Transverse colon (tissue), 4 donors: ENCODE measurements at regions of chr6 and their contacts with region 1.

Region 1: DNA sequence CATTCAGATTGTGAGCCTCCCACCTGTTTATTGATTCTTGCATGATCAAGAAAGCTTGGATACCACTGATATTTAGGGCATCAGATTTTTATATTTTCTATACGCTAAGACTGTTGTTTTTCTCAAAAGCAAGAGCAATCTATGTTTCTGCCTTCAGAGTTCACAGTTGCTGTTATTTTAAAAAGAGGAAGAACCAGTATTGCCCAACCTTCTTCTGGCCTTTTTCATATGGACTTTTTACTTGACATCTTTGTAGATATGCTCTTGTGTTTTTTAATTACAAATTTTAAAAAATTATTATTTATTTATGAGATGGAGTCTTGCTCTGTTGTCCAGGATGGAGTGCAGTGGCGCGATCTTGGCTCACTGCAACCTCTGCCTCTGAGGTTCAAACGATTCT is 28.9 kb downstream of the SLC17A5 start:
- DNase-seq: no peak
- H3K4me3 ChIP-seq: no peak overlapping the region
- H3K27ac ChIP-seq: no peak overlapping the region
- H3K4me1 ChIP-seq: no peaks in the 10 kb centered on the region
- H3K27me3 ChIP-seq: no peaks in the 10 kb centered on the region
- CTCF ChIP-seq: no peak
- EP300 ChIP-seq: no peak
- POLR2A ChIP-seq: no peak

Region 2: DNA sequence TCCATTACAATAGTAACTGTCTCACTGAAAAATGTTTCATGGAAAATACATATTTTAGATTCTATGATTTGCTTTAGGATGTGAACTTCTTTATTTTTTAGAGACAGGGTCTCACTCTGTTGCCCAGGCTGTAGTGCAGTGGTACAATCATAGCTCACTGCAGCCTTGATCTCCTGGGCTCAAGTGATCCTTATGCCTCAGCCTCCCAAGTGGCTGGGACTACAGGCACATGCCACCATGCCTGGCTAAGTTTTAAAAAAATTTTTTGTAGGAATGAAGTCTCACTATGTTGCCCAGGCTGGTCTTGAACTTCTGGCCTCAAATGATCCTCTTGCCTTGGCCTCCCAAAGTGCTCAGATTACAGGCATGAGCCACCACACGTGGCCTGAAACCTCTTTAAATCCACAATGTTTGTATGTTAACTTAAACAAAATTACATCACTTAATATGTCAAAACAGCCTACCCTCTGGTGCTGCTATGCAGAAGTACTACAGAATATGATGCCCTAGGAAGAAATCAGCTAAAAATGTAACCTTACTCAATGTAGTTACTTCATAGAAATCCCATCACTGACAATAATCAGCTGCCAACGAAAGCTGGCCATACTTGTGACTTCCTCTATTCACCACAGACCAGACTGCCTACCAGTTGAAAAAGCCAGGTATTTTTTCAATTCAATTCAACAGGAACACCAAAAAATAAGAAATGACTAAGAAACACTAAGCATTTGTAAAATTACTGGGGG is 121.7 kb before region 1 on chr6:
- in situ Hi-C with region 1: loop called in 3 of 4 experiments (anchors 10 to 25 kb)
- intact Hi-C with region 1: no loop called
- DNase-seq: no peak
- H3K4me3 ChIP-seq: no peak overlapping the region
- H3K27ac ChIP-seq: no peak overlapping the region
- H3K4me1 ChIP-seq: no peaks in the 10 kb centered on the region
- H3K27me3 ChIP-seq: no peaks in the 10 kb centered on the region
- CTCF ChIP-seq: no peak
- EP300 ChIP-seq: no peak
- POLR2A ChIP-seq: no peak